GM13976 (cell line): ENCODE measurements at regions of chr6 and their contacts with region 1.

Region 1: GRCh38 chr6:56843573-56844349 is 111.1 kb upstream of the BEND6 start:
- DNase-seq: peak; percentile 86
- CTCF ChIP-seq: peak; percentile 52

Region 2: DNA sequence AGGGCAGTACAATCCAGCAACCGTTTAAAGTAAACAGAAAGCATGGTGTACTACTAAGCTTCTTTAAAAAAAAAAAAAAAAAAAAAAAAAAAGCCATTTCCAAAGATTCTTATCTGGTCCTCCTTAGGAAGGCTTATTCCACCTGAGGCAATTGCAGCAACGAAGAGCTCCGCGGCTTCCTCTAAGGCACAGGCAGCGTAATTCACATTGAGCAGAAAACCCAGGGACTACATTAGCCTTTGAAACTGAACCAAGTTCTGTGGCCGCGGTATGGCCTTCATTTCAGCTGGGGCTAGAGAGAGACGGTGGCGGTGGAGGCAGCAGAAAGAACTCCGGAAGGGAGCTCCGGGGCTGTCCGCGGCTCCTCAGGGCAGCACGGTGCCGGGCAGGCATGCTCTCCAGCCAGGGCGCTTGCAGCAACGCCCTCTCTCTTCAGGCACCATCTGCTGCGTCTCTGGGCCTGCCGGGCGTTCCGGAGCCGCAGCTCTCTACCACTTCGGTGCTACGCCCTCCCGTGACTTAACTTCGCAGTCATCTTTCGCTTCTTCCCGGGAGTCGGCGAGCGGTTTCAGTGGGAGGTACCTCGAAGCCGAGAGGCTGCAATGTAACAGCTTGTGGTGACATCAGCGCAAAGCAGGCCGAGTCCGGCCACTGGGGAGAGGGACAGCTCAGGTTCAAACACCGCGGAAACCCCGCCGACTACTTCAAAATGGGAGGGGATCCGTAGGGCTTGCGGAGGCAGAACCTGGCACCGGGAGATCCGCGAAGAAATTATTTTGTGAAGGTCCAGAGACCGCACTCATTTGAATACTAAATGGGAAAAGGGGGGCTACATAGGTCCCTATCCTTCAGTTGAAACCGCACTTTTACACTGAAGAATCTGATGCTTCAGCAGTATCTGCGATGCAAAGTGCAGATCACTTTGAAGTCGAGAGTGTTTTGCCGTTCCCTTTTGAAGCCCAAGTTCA is 301.1 kb before region 1 on chr6:
- in situ Hi-C with region 1: no loop called
- DNase-seq: peak; percentile 82
- CTCF ChIP-seq: peak; percentile 46

Region 3: GRCh38 chr6:56713254-56713672 is 130.5 kb before region 1 on chr6:
- in situ Hi-C with region 1: loop called (anchors 10 kb)
- DNase-seq: no peak
- CTCF ChIP-seq: no peak

Region 4: GRCh38 chr6:56764081-56764566 is 79.6 kb before region 1 on chr6:
- in situ Hi-C with region 1: loop called (anchors 10 kb)
- DNase-seq: no peak
- CTCF ChIP-seq: peak; percentile 26

Region 5: GRCh38 chr6:57221936-57222742 is 378.4 kb after region 1 on chr6 and contains the start of gene RAB23:
- in situ Hi-C with region 1: no loop called
- DNase-seq: peak; percentile 91
- CTCF ChIP-seq: no peak